ENCODE measurements at regions of chr2 and their contacts with region 1.

Region 1: DNA sequence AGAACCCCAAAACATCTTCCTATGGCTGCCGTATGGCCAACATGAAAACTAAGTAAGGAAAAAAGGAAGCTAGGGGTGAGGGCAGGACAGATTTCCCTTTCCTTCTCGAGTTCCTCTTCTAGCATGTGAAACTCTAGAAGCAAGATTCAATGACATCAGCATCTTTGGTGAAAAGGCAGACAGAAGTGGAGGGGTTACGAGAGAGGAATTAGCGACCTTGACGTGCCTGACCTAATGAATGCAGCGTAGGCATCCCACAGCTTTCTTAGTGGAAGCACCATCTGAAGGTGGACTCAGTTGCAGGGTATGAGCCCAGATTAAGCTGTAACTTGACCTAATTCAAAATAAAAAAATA is 47.9 kb upstream of the PELI1 start:
- DNase-seq: peak; percentile 64
- ATAC-seq: peak; percentile 62
- H3K4me3 ChIP-seq: peak overlapping the region in 1 of 5 experiments; percentile 9
- H3K4me3 Mint-ChIP-seq: peak overlapping the region; percentile 46
- H3K27ac ChIP-seq: no peak overlapping the region
- H3K27ac Mint-ChIP-seq: peak overlapping the region; percentile 10
- H3K4me1 ChIP-seq: peaks cover 19 to 27% of the 10 kb centered on the region in 2 donors
- H3K4me1 Mint-ChIP-seq: peaks cover 36% of the 10 kb centered on the region
- H3K27me3 ChIP-seq: no peaks in the 10 kb centered on the region
- H3K27me3 Mint-ChIP-seq: no peaks in the 10 kb centered on the region
- CTCF ChIP-seq: no peak

Region 2: GRCh38 chr2:64228126-64228678 is 36.1 kb after region 1 on chr2:
- CTCF ChIA-PET with region 1: no interaction called
- POLR2A ChIA-PET with region 1: no interaction called
- intact Hi-C with region 1: loop called (anchors 5 kb)
- DNase-seq: peak; percentile 75
- ATAC-seq: peak; percentile 98
- H3K4me3 ChIP-seq: peak overlapping the region; percentile 46 to 81 (median 72)
- H3K4me3 Mint-ChIP-seq: peak overlapping the region; percentile 98
- H3K27ac ChIP-seq: peak overlapping the region; percentile 60 to 63
- H3K27ac Mint-ChIP-seq: peak overlapping the region; percentile 98
- H3K4me1 ChIP-seq: peaks cover 25 to 28% of the 10 kb centered on the region in 2 donors
- H3K4me1 Mint-ChIP-seq: peaks cover 32% of the 10 kb centered on the region
- H3K27me3 ChIP-seq: no peaks in the 10 kb centered on the region
- H3K27me3 Mint-ChIP-seq: no peaks in the 10 kb centered on the region
- CTCF ChIP-seq: no peak

Region 3: GRCh38 chr2:64359892-64360657 is 168.0 kb after region 1 on chr2:
- CTCF ChIA-PET with region 1: no interaction called
- POLR2A ChIA-PET with region 1: no interaction called
- intact Hi-C with region 1: no loop called
- DNase-seq: peak; percentile 7
- ATAC-seq: peak; percentile 74
- H3K4me3 ChIP-seq: no peak overlapping the region
- H3K4me3 Mint-ChIP-seq: peak overlapping the region; percentile 68
- H3K27ac ChIP-seq: no peak overlapping the region
- H3K27ac Mint-ChIP-seq: peak overlapping the region; percentile 64
- H3K4me1 ChIP-seq: peaks cover 4 to 11% of the 10 kb centered on the region in 2 donors
- H3K4me1 Mint-ChIP-seq: peaks cover 11% of the 10 kb centered on the region
- H3K27me3 ChIP-seq: peaks cover 0 to 22% (median 9%) of the 10 kb centered on the region in 4 experiments
- H3K27me3 Mint-ChIP-seq: peaks cover 37% of the 10 kb centered on the region
- CTCF ChIP-seq: no peak

Region 4: GRCh38 chr2:64538764-64539433 is 346.8 kb after region 1 on chr2:
- CTCF ChIA-PET with region 1: no interaction called
- POLR2A ChIA-PET with region 1: no interaction called
- intact Hi-C with region 1: no loop called
- DNase-seq: no peak
- ATAC-seq: no peak
- H3K4me3 ChIP-seq: no peak overlapping the region
- H3K4me3 Mint-ChIP-seq: no peak overlapping the region
- H3K27ac ChIP-seq: no peak overlapping the region
- H3K27ac Mint-ChIP-seq: no peak overlapping the region
- H3K4me1 ChIP-seq: peaks cover 16 to 27% of the 10 kb centered on the region in 2 donors
- H3K4me1 Mint-ChIP-seq: peaks cover 69% of the 10 kb centered on the region
- H3K27me3 ChIP-seq: no peaks in the 10 kb centered on the region
- H3K27me3 Mint-ChIP-seq: no peaks in the 10 kb centered on the region
- CTCF ChIP-seq: no peak